ENCODE measurements at regions of chr18 and their contacts with region 1.

Region 1: GRCh38 chr18:54983041-54983686 is 23.9 kb upstream of the CCDC68 start:
- DNase-seq: peak in 3 of 14 experiments; percentile 45 to 62 (median 58)
- ATAC-seq: peak; percentile 44
- H3K4me3 ChIP-seq: no peak overlapping the region
- H3K4me3 Mint-ChIP-seq: no peak overlapping the region
- H3K27ac ChIP-seq: no peak overlapping the region
- H3K27ac Mint-ChIP-seq: no peak overlapping the region
- H3K4me1 ChIP-seq: no peaks in the 10 kb centered on the region
- H3K4me1 Mint-ChIP-seq: no peaks in the 10 kb centered on the region
- H3K27me3 ChIP-seq: no peaks in the 10 kb centered on the region
- H3K27me3 Mint-ChIP-seq: no peaks in the 10 kb centered on the region
- CTCF ChIP-seq: peak; percentile 76

Region 2: GRCh38 chr18:54392543-54393023 is 590.6 kb before region 1 on chr18:
- CTCF ChIA-PET with region 1: no interaction called
- POLR2A ChIA-PET with region 1: no interaction called
- intact Hi-C with region 1: loop called (anchors 1 to 2 kb)
- DNase-seq: peak in 3 of 14 experiments; percentile 54 to 74 (median 71)
- ATAC-seq: peak; percentile 69
- H3K4me3 ChIP-seq: no peak overlapping the region
- H3K4me3 Mint-ChIP-seq: no peak overlapping the region
- H3K27ac ChIP-seq: no peak overlapping the region
- H3K27ac Mint-ChIP-seq: no peak overlapping the region
- H3K4me1 ChIP-seq: no peaks in the 10 kb centered on the region
- H3K4me1 Mint-ChIP-seq: no peaks in the 10 kb centered on the region
- H3K27me3 ChIP-seq: no peaks in the 10 kb centered on the region
- H3K27me3 Mint-ChIP-seq: peaks cover 16% of the 10 kb centered on the region
- CTCF ChIP-seq: peak; percentile 80

Region 3: DNA sequence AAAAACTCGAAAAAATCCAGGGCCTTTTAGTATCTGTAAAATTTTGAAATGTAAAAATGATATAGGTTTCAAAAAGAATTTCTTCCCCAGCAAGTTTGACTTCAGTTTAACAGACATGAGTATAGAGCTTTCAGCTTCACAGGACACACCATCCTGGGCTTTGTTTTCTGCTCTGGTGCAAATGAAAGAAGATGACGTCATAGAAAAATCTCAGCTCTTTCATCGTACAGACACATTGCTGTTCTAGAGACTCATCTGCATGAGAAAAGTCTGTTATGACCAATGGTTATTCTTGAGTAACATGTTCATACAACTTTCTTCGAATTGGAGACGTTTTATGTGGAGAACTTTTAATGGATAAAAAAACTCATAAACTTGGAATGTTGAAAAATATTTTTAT is 503.8 kb before region 1 on chr18:
- CTCF ChIA-PET with region 1: no interaction called
- POLR2A ChIA-PET with region 1: no interaction called
- intact Hi-C with region 1: no loop called
- DNase-seq: no peak
- ATAC-seq: no peak
- H3K4me3 ChIP-seq: no peak overlapping the region
- H3K4me3 Mint-ChIP-seq: no peak overlapping the region
- H3K27ac ChIP-seq: no peak overlapping the region
- H3K27ac Mint-ChIP-seq: no peak overlapping the region
- H3K4me1 ChIP-seq: no peaks in the 10 kb centered on the region
- H3K4me1 Mint-ChIP-seq: no peaks in the 10 kb centered on the region
- H3K27me3 ChIP-seq: no peaks in the 10 kb centered on the region
- H3K27me3 Mint-ChIP-seq: peaks cover 23% of the 10 kb centered on the region
- CTCF ChIP-seq: no peak

Region 4: GRCh38 chr18:54558609-54559585 is 424.3 kb before region 1 on chr18:
- CTCF ChIA-PET with region 1: no interaction called
- POLR2A ChIA-PET with region 1: no interaction called
- intact Hi-C with region 1: loop called (anchors 2 to 5 kb)
- DNase-seq: peak in 3 of 14 experiments; percentile 14 to 34 (median 23)
- ATAC-seq: no peak
- H3K4me3 ChIP-seq: no peak overlapping the region
- H3K4me3 Mint-ChIP-seq: no peak overlapping the region
- H3K27ac ChIP-seq: no peak overlapping the region
- H3K27ac Mint-ChIP-seq: no peak overlapping the region
- H3K4me1 ChIP-seq: no peaks in the 10 kb centered on the region
- H3K4me1 Mint-ChIP-seq: no peaks in the 10 kb centered on the region
- H3K27me3 ChIP-seq: no peaks in the 10 kb centered on the region
- H3K27me3 Mint-ChIP-seq: no peaks in the 10 kb centered on the region
- CTCF ChIP-seq: peak; percentile 59

Region 5: DNA sequence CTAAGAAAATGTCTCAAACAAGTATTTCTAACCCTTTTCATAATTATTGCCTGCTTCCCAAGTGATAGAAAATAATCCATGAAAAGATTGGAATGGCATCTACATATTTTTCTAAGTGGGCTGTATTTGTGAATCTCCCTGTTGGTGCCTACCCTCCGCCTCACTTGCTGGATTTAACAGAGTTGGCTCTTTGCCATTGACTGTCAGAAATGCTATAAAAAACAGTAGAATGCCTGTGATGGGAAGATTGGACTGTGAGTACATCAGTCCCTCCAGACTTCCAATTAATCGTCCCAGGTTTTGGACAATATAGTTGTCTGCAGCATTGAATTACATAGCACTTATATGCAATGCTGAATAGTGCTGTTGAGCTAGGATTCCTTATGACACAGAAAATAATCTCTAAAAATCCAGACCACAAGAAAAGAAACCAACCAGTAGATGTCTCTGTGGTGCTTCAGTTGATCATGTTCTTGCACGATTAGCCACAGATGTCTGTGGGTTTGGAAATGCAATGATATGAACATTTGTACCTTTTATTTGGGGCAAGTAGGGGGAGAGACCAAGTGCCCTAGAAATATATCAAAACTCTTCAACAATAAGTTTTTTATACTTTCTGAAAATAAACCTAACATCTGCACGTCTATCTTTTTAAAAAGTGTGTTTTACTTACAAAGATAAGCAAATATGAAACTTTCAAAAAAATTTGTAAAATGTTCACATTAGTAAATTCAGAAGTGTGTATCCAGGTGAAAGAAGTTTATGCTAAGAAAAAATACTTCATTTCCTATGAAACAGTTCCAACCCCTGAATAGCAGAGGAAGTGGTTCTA is 303.6 kb before region 1 on chr18:
- CTCF ChIA-PET with region 1: no interaction called
- POLR2A ChIA-PET with region 1: no interaction called
- intact Hi-C with region 1: loop called (anchors 1 kb)
- DNase-seq: peak in 3 of 14 experiments; percentile 46 to 56 (median 50)
- ATAC-seq: peak; percentile 41
- H3K4me3 ChIP-seq: no peak overlapping the region
- H3K4me3 Mint-ChIP-seq: no peak overlapping the region
- H3K27ac ChIP-seq: no peak overlapping the region
- H3K27ac Mint-ChIP-seq: no peak overlapping the region
- H3K4me1 ChIP-seq: no peaks in the 10 kb centered on the region
- H3K4me1 Mint-ChIP-seq: peaks cover 5% of the 10 kb centered on the region
- H3K27me3 ChIP-seq: no peaks in the 10 kb centered on the region
- H3K27me3 Mint-ChIP-seq: no peaks in the 10 kb centered on the region
- CTCF ChIP-seq: peak; percentile 55

Measured in CD4-positive, alpha-beta T cell (primary cell).